Mammary epithelial cell (primary cell): ENCODE measurements at regions of chr11 and their contacts with region 1.

Region 1: GRCh38 chr11:63023841-63024648 is 8.4 kb upstream of the SLC22A8 start:
- DNase-seq: peak; percentile 52
- H3K4me3 ChIP-seq: no peak overlapping the region
- H3K27ac ChIP-seq: no peak overlapping the region
- H3K4me1 ChIP-seq: no peaks in the 10 kb centered on the region
- H3K27me3 ChIP-seq: no peaks in the 10 kb centered on the region
- CTCF ChIP-seq: peak; percentile 98 to 100

Region 2: GRCh38 chr11:63099555-63099954 is 75.5 kb after region 1 on chr11:
- CTCF ChIA-PET with region 1: no interaction called
- dilution Hi-C with region 1: loop called (anchors 5 kb)
- in situ Hi-C with region 1: no loop called
- intact Hi-C with region 1: no loop called
- DNase-seq: no peak
- H3K4me3 ChIP-seq: no peak overlapping the region
- H3K27ac ChIP-seq: no peak overlapping the region
- H3K4me1 ChIP-seq: no peaks in the 10 kb centered on the region
- H3K27me3 ChIP-seq: no peaks in the 10 kb centered on the region
- CTCF ChIP-seq: no peak

Region 3: GRCh38 chr11:63375434-63375833 is 351.4 kb after region 1 on chr11:
- CTCF ChIA-PET with region 1: no interaction called
- dilution Hi-C with region 1: no loop called
- in situ Hi-C with region 1: no loop called
- intact Hi-C with region 1: no loop called
- DNase-seq: no peak
- H3K4me3 ChIP-seq: no peak overlapping the region
- H3K27ac ChIP-seq: no peak overlapping the region
- H3K4me1 ChIP-seq: no peaks in the 10 kb centered on the region
- H3K27me3 ChIP-seq: no peaks in the 10 kb centered on the region
- CTCF ChIP-seq: no peak